A673 (cell line): ENCODE measurements at regions of chr13 and their contacts with region 1.

Region 1: DNA sequence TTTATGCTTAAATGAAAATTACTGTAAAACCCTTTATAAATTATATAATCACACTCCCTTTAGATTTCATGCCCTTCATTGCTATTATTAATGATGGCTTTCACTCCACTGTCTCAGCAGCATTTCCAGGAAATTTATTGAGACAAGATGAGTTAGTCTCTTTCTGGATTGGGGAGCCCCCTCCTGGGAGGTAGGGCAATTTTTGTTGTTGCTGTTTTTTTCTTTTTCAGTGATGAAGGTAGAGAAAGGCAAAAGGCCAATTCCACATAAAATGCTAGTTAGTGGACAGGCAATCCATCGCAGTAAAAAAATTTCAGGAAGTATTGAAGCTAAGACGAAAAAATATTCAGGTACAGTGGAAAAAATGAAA is 80.2 kb downstream of the TEX26 start:
- DNase-seq: peak; percentile 80
- H3K4me3 ChIP-seq: peak overlapping the region; percentile 51
- H3K27ac ChIP-seq: peak overlapping the region; percentile 99
- H3K4me1 ChIP-seq: peaks cover 53% of the 10 kb centered on the region
- H3K27me3 ChIP-seq: no peaks in the 10 kb centered on the region
- CTCF ChIP-seq: peak; percentile 58

Region 2: DNA sequence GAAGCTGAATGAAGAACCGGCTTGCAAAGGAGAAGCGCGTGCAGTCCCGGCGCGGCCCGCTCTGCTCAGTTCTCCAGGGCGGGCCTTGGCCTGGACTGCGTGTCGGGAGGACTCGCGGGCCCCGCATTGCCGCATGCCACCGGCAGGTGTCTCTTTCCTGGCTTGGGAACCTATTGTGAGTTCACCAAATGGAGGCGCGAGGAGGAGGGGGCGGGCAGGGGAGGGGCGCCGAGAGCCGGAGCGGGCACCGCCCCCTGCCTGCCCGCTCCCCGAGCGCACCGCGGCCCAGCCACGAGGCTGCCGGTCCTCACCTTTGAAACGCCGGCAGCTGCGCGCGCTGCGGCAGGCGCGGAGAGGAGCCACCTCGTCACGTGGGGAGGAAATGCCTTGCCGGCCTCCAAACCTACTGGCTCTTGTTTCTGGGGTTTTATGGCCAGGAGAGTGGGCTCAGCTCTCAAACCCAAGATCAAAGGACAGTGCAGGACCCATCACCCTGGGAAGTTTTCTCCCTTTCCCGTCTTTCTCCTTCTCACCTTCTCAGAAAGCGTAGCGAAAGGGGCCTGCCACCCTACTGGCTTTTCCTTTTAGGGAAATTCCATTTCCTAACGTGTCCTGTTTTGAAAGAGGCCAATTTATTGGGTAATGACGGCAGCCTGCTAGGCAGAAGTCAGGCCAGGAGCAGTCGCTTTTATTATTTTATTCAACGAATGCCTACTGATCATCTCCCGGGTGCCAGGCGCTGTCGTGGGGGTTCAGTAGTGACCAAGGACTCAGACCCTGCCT is 604.1 kb before region 1 on chr13:
- CTCF ChIA-PET with region 1: no interaction called
- POLR2A ChIA-PET with region 1: no interaction called
- intact Hi-C with region 1: loop called (anchors 1 kb)
- DNase-seq: no peak
- H3K4me3 ChIP-seq: no peak overlapping the region
- H3K27ac ChIP-seq: peak overlapping the region; percentile 97
- H3K4me1 ChIP-seq: peaks cover 67% of the 10 kb centered on the region
- H3K27me3 ChIP-seq: no peaks in the 10 kb centered on the region
- CTCF ChIP-seq: no peak

Region 3: DNA sequence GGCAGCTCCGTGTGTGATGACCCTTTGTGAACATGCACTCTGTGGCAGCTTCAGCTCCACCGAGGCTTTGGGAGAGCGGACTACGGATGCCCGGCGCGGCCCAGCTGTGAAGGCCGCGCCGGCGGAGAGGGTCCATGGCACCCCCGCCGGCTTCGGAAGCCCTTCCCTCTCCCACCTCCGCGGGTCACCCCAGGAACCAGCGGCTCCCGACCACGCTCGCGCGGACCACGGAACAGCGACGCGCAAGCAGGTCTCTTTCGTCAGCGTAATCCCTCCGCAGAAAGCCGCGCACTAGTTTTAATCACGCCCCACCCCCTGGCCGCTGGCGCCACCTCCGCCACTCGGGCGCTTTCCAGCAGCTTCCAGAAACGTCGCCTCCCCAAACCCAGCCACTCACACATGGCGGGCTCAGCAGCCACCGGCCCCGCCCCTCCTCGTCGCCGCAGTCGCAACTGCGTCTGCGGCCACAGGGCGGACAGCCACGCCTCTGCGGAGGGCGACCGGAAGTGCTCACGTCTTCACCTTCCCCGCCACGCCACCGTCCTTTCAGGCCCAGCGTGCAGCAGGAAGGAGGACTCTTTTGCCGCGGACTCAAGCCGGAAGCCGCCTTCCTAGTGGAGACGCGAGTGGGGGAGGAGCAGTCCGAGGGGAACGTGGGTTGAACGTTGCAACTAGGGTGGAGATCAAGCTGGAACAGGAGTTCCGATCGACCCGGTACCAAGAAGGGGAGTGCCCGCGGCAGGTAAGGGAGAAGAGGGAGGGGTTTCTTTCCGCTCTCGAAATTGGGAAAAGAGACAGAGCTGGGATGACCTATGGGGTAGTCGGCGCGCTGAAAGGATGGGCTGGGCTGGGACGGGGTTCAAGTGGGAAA is 395.1 kb before region 1 on chr13 and contains the start of gene USPL1:
- CTCF ChIA-PET with region 1: no interaction called
- POLR2A ChIA-PET with region 1: no interaction called
- intact Hi-C with region 1: loop called (anchors 10 kb)
- DNase-seq: peak; percentile 99
- H3K4me3 ChIP-seq: peak within 1 kb of the TSS; percentile 82
- H3K27ac ChIP-seq: peak within 1 kb of the TSS; percentile 99
- H3K4me1 ChIP-seq: peaks cover 7% of the 10 kb centered on the region
- H3K27me3 ChIP-seq: no peaks in the 10 kb centered on the region
- CTCF ChIP-seq: no peak; the same call in 1 of the 2 replicates
- total RNA-seq, gene USPL1: 22.8 and 28.5 TPM in 2 replicates

Region 4: DNA sequence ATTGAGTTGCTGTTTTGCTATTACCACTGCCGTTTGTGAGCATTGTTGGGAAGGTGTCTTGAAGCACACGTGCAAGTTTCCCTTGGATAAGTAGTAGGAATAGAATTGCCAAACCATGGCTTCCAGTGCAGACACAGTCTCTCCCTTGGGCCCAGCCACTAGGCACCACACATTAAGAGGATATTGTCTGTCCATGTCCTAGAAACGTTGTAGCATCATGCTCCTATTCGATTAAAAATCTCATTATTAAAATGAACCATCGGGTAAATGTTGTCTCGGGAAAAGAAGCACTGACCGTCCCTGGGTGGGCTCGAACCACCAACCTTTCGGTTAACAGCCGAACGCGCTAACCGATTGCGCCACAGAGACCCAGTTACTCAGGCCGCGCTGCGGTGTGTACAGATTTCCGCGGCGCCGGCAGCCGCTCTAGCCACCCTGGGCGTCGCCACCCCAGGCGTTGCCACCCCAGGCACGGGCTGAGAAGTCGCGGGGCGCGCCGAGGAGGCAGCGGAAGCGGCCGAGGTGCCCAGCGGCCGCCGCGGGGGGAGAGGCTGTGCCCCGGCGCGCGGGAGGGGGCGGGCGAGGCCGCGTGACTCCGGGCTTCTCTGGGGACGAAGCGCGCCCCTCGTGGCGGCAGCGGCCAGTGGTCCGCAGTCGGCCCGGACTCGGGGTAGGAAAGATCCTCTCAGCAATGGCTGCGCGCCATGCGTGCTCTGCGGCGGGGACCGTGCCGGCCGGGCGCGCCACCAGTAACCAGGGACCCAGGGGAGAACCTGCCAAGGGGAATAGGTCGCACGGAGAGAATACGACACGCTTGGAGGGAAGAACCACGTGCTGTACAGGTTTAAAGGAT is 338.7 kb before region 1 on chr13:
- CTCF ChIA-PET with region 1: no interaction called
- POLR2A ChIA-PET with region 1: no interaction called
- intact Hi-C with region 1: loop called (anchors 10 kb)
- DNase-seq: peak; percentile 89
- H3K4me3 ChIP-seq: peak overlapping the region; percentile 54
- H3K27ac ChIP-seq: peak overlapping the region; percentile 63
- H3K4me1 ChIP-seq: no peaks in the 10 kb centered on the region
- H3K27me3 ChIP-seq: no peaks in the 10 kb centered on the region
- CTCF ChIP-seq: peak; percentile 60

Region 5: GRCh38 chr13:30802953-30803478 is 209.6 kb before region 1 on chr13:
- CTCF ChIA-PET with region 1: no interaction called
- POLR2A ChIA-PET with region 1: interaction called, 3 read pairs
- intact Hi-C with region 1: loop called (anchors 10 kb)
- DNase-seq: peak; percentile 90
- H3K4me3 ChIP-seq: no peak overlapping the region
- H3K27ac ChIP-seq: no peak overlapping the region
- H3K4me1 ChIP-seq: peaks cover 24% of the 10 kb centered on the region
- H3K27me3 ChIP-seq: no peaks in the 10 kb centered on the region
- CTCF ChIP-seq: peak; percentile 98

Region 6: DNA sequence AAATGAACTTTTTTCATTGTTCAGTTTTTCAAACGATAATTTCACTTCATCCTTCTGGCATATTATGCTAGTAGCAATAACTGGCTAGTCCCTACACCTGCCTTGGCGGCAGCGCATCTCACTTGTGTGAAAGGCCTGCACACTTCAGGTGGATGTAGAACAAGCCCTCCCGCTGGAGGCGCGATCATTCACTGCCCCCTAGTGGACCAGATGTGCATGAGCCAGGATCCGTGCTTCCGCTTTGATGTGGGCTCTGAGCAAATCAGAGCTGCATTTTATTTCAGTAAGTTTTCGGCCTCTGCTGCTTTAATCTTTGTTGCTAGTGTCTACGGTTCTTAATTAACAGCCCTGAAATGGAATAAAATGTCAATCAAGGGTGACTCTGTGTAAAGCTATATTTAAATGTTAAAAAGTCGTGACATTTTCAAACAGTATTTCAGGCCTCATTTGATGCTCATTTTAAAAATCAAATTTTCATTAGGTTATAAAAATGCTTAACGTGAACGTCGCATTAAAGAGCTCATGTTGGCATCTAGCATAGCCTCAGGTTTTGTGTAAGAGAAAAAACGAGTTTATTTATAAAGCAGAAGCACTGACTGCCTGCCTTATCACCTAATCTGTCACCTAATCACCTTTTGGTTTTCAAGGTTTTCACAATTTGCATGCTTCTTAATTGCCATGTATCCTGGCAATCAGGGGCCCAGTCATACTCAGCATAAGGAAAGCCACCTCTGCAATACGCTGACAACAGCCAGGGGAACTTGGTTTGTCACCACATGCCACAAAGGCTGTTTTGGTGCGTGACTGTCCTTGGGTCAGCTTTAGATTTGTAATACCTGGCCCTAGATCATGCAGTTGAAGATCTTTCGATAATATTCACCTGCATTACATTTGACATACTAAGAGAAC is 32.0 kb after region 1 on chr13:
- CTCF ChIA-PET with region 1: interaction called, 3 read pairs
- POLR2A ChIA-PET with region 1: interaction called, 6 read pairs
- intact Hi-C with region 1: loop called (anchors 1 kb)
- DNase-seq: peak; percentile 89
- H3K4me3 ChIP-seq: no peak overlapping the region
- H3K27ac ChIP-seq: peak overlapping the region; percentile 68
- H3K4me1 ChIP-seq: peaks cover 44% of the 10 kb centered on the region
- H3K27me3 ChIP-seq: no peaks in the 10 kb centered on the region
- CTCF ChIP-seq: peak; percentile 95

Region 7: DNA sequence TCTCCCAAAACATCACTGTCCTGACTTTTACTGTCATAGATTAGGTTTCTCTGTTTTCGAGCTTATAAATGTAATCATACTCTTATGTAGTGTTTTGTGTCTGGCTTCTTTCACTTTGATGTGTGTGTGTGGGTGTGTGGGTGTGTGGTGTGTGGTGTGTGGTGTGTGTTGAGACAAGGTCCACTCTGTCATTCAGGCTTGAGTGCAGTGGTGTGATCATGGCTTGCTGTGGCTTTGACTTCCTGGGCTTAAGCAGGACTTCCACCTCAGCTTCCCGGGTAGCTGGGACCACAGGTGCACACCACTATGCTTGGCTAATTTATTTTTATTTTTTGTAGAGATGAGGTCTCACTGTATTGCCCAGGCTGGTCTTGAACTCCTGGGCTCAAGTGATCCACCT is 1633.2 kb after region 1 on chr13:
- CTCF ChIA-PET with region 1: no interaction called
- POLR2A ChIA-PET with region 1: no interaction called
- intact Hi-C with region 1: no loop called
- DNase-seq: no peak
- H3K4me3 ChIP-seq: no peak overlapping the region
- H3K27ac ChIP-seq: no peak overlapping the region
- H3K4me1 ChIP-seq: peaks cover 35% of the 10 kb centered on the region
- H3K27me3 ChIP-seq: no peaks in the 10 kb centered on the region
- CTCF ChIP-seq: no peak